Activated T-helper 2 cell treated with anti-CD3 and anti-CD28 coated beads, Interferon-gamma antibody, Interleukin-2, Interleukin-4, amounts not matched to agents 10 μg/mL and 5 μg/mL and 100 μg/mL, durations not matched to agents 14 hours and 24 hours and 36 hours (primary cell): ENCODE measurements at regions of chr9 and their contacts with region 1.

Region 1: GRCh38 chr9:21402386-21403251 is 6.3 kb upstream of the IFNA8 start:
- DNase-seq: no peak
- H3K4me3 Mint-ChIP-seq: peak overlapping the region; percentile 54
- H3K27ac Mint-ChIP-seq: no peak overlapping the region
- H3K4me1 Mint-ChIP-seq: peaks cover 12% of the 10 kb centered on the region
- H3K27me3 Mint-ChIP-seq: peaks cover 69% of the 10 kb centered on the region

Region 2: DNA sequence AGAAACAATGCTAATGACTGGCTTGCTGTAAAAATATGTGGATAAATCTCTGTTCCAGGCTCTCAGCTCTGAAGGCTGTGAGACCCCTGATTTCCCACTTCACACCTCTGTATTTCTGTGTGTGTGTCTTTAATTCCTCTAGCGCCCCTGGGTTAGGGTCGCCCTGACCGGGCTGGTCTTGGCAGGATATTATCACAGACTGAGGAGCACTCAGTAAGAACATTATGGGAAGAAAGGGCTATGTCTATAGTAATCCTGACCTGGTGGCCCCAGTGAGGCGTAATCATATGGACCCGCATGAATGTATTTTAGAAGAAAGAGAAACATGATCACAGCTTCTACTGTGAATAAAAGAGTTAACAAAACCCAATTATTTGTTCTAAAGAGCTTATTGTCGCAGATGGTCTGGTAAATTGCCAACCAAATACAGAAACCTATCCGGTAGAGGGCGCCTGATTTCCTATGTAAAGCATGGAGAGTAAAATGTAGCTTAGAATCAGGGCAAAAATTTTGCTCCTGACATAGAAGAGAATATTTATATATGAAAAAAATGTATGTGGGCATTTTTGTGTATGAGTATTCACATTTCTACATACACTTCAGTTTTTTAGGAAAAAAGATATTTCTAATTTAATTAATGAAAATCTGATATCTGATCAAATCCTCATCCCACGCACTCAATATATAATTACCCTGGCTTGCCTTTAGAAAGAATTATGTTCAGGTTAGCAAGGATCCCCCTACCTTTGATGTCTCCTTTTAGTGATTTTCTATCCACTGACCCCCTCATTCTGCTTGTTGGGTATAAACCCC is 31.8 kb after region 1 on chr9:
- intact Hi-C with region 1: loop called (anchors 5 kb)
- DNase-seq: no peak
- H3K4me3 Mint-ChIP-seq: no peak overlapping the region
- H3K27ac Mint-ChIP-seq: no peak overlapping the region
- H3K4me1 Mint-ChIP-seq: peaks cover 2% of the 10 kb centered on the region
- H3K27me3 Mint-ChIP-seq: peaks cover 49% of the 10 kb centered on the region